Activated CD4-positive, alpha-beta T cell treated with anti-CD3 and anti-CD28 coated beads for 36 hours (primary cell): ENCODE measurements at regions of chr19 and their contacts with region 1.

Region 1: GRCh38 chr19:7550987-7551761 is 15.7 kb downstream of the PNPLA6 start:
- DNase-seq: peak; percentile 77
- ATAC-seq: peak; percentile 87
- H3K4me3 Mint-ChIP-seq: no peak overlapping the region
- H3K27ac Mint-ChIP-seq: peak overlapping the region; percentile 58
- H3K4me1 Mint-ChIP-seq: peaks cover 11% of the 10 kb centered on the region
- H3K27me3 Mint-ChIP-seq: no peaks in the 10 kb centered on the region

Region 2: DNA sequence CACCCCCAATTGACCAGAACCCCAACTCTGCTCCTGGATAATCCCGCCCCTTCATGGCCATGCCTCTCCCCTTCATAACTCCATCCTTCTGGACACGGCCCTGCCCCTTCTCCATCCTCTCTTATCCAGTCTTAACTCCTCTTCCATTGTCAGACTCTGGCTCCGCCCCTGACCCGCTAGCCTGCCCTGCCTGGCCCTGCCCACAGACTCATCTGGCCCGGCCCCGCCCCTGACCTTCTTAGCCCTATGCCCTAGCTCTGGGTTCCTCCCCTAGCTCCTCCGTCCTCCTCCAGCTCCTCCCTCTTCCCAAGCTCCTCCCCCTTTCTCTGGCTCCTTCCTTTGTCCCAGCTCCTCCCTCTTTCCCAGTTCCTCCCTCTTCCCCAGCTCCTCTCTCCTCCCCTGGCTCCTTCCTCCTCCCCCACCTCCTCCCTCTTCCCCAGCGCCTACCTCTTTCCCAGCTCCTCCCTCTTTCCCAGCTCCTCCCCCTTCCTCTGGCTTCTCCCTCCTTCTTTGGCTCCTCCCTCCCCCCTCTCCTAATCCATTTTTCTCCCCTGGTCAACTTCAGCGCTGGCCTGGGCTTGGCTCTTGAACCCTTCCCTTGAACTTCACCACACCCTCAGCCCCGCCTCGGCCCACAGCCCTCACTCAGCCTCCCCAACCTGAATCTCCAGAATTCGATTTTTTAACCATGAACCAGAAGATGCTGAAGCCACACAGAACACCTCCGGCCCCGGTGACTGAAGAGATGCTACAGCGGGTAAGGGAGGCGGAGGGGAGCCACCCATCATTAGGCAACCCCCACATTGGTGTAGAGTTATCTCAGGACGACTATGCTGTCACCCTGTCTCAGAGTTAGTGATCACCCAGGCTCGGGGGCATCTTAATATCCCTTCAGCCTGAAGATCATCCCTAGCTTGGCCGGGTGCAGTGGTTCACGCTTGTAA is 44.5 kb before region 1 on chr19:
- CTCF ChIA-PET with region 1: no interaction called
- POLR2A ChIA-PET with region 1: no interaction called
- intact Hi-C with region 1: loop called in 1 of 2 experiments (anchors 1 kb)
- DNase-seq: peak; percentile 81
- ATAC-seq: peak; percentile 85
- H3K4me3 Mint-ChIP-seq: no peak overlapping the region
- H3K27ac Mint-ChIP-seq: no peak overlapping the region
- H3K4me1 Mint-ChIP-seq: peaks cover 13% of the 10 kb centered on the region
- H3K27me3 Mint-ChIP-seq: peaks cover 28% of the 10 kb centered on the region